ENCODE measurements at regions of chr17 and their contacts with region 1.

Region 1: DNA sequence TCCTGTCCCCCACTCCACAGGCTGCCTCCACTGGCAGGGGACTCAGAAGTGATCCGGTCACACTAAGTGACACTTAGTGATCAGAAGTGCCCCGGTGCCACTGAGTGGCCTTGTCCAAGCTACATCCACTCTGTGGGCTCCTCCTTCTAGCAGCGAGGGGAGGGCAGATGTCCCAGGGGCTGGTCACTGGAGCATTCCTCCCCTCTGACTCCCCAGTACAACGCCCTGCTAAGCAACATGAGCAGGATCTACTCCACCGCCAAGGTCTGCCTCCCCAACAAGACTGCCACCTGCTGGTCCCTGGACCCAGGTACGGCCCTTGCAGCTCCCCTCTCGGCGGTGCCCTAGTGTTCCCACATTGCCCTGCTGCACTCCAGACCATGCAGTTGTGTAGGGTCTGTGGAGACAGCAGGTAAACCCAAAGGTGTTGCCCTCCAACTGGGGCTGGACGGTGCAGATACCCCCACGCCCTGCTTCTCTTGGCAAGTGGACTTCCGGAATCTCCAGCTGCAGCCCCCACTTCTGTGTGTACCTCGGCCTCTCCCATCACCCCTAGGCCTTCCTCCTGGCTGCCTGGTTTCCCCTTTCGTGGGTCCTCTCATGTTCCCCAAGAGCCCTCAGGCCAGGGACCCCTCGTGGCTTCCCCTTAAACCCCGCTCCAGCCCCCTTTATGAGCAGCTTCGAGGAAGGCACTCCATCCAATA is 2.1 kb downstream of the ACE start:
- DNase-seq: peak; percentile 97
- ATAC-seq: peak; percentile 82
- H3K4me3 ChIP-seq: no peak overlapping the region
- H3K27ac ChIP-seq: no peak overlapping the region
- H3K4me1 ChIP-seq: peaks cover 20% of the 10 kb centered on the region
- H3K27me3 ChIP-seq: no peaks in the 10 kb centered on the region
- CTCF ChIP-seq: peak; percentile 97

Region 2: DNA sequence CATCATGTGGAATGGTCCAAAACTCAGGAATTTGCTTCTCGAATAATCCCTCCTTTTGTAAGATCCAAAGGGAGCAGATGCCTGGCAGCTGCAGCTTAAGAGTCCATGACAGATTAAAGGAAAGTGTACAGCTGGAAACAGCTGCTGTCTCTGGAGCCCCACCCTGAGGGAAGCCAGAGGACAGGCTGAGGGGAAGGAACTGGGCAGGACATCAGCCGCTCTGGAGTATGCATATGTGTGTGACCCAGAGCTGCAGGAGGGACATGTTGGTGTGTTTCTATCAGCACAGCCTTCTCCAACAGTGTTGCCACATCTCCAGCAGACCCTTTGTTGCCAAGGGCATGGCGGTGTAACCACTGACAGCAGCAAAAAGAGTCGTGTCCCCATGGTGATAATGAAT is 79.1 kb before region 1 on chr17:
- CTCF ChIA-PET with region 1: no interaction called
- POLR2A ChIA-PET with region 1: no interaction called
- intact Hi-C with region 1: no loop called
- DNase-seq: no peak
- ATAC-seq: no peak
- H3K4me3 ChIP-seq: no peak overlapping the region
- H3K27ac ChIP-seq: no peak overlapping the region
- H3K4me1 ChIP-seq: no peaks in the 10 kb centered on the region
- H3K27me3 ChIP-seq: no peaks in the 10 kb centered on the region
- CTCF ChIP-seq: no peak

Region 3: DNA sequence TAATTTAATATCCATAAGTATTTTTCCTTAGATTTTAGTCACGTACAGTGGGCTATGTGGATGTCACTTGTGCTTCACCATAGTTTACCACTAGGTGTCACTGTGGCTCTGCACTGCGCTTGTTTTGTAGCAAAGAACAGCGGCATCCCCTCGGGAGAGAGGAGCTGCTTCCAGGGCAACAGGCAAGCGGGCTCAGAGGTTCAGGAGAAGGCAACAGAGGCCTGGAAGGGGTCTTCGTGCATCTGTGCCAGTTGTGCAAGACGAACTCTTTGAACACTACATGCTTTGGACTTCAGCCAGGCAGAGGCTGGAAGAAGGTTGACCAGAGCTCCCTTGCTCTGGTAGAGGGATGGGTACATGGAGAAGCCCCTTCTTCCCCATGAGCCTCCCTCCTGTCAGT is 53.5 kb before region 1 on chr17:
- CTCF ChIA-PET with region 1: interaction called, 37 read pairs
- POLR2A ChIA-PET with region 1: interaction called, 5 read pairs
- intact Hi-C with region 1: loop called (anchors 1 kb)
- DNase-seq: peak; percentile 96
- ATAC-seq: peak; percentile 77
- H3K4me3 ChIP-seq: no peak overlapping the region
- H3K27ac ChIP-seq: no peak overlapping the region
- H3K4me1 ChIP-seq: peaks cover 20% of the 10 kb centered on the region
- H3K27me3 ChIP-seq: no peaks in the 10 kb centered on the region
- CTCF ChIP-seq: peak; percentile 98

Region 4: GRCh38 chr17:63445979-63446691 is 32.8 kb before region 1 on chr17 and contains the start of gene CYB561:
- CTCF ChIA-PET with region 1: interaction called, 38 read pairs
- POLR2A ChIA-PET with region 1: interaction called, 6 read pairs
- intact Hi-C with region 1: loop called (anchors 1 kb)
- DNase-seq: peak; percentile 90
- ATAC-seq: peak; percentile 77
- H3K4me3 ChIP-seq: peak within 1 kb of the TSS; percentile 93
- H3K27ac ChIP-seq: peak within 1 kb of the TSS; percentile 91
- H3K4me1 ChIP-seq: peaks cover 41% of the 10 kb centered on the region
- H3K27me3 ChIP-seq: no peaks in the 10 kb centered on the region
- CTCF ChIP-seq: peak; percentile 55
- total RNA-seq, gene CYB561: 125 and 145 TPM in 2 replicates

Region 5: GRCh38 chr17:63459952-63460393 is 19.0 kb before region 1 on chr17:
- CTCF ChIA-PET with region 1: interaction called, 4 read pairs
- POLR2A ChIA-PET with region 1: no interaction called
- intact Hi-C with region 1: loop called (anchors 2 kb)
- DNase-seq: no peak
- ATAC-seq: no peak
- H3K4me3 ChIP-seq: no peak overlapping the region
- H3K27ac ChIP-seq: peak overlapping the region; percentile 71; the same call in 1 of the 2 replicates
- H3K4me1 ChIP-seq: peaks cover 26% of the 10 kb centered on the region
- H3K27me3 ChIP-seq: no peaks in the 10 kb centered on the region
- CTCF ChIP-seq: no peak